PC-9 (cell line): ENCODE measurements at regions of chr3 and their contacts with region 1.

Region 1: GRCh38 chr3:190265796-190266195 is 56.5 kb downstream of the CLDN1 start:
- DNase-seq: peak; percentile 79 to 97
- H3K4me3 ChIP-seq: no peak overlapping the region
- H3K27ac ChIP-seq: peak overlapping the region; percentile 62
- H3K4me1 ChIP-seq: peaks cover 22% of the 10 kb centered on the region
- H3K27me3 ChIP-seq: no peaks in the 10 kb centered on the region
- CTCF ChIP-seq: no peak

Region 2: DNA sequence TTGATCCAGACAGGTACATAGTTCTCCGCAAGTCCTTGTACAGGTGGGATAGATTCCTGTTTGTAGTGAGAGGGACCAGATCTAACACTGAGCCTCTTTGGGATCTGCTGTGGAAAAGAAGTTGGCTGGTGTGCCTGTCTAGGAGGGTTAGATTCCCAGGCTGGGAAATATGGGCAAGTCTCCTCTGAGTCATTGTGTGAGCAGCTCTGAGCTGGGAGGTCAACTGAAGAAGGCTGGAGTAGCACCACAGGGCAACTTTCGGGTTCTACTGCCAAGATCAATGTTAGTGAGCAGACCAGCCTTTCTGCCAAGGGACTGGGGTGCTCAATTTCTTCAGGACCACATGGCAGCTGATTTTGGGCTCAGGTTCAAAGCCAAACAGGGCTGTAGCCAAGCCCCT is 23.0 kb after region 1 on chr3:
- CTCF ChIA-PET with region 1: no interaction called
- POLR2A ChIA-PET with region 1: no interaction called
- intact Hi-C with region 1: no loop called
- DNase-seq: no peak
- H3K4me3 ChIP-seq: no peak overlapping the region
- H3K27ac ChIP-seq: no peak overlapping the region
- H3K4me1 ChIP-seq: no peaks in the 10 kb centered on the region
- H3K27me3 ChIP-seq: no peaks in the 10 kb centered on the region
- CTCF ChIP-seq: no peak

Region 3: GRCh38 chr3:190302209-190302867 is 36.5 kb after region 1 on chr3:
- CTCF ChIA-PET with region 1: no interaction called
- POLR2A ChIA-PET with region 1: no interaction called
- intact Hi-C with region 1: loop called (anchors 1 kb)
- DNase-seq: peak in 1 of 2 experiments; percentile 43
- H3K4me3 ChIP-seq: 0 out of 2 replicates have a peak overlapping the region, but pooled peaks have one; percentile 2
- H3K27ac ChIP-seq: no peak overlapping the region
- H3K4me1 ChIP-seq: peaks cover 40% of the 10 kb centered on the region
- H3K27me3 ChIP-seq: no peaks in the 10 kb centered on the region
- CTCF ChIP-seq: no peak

Region 4: DNA sequence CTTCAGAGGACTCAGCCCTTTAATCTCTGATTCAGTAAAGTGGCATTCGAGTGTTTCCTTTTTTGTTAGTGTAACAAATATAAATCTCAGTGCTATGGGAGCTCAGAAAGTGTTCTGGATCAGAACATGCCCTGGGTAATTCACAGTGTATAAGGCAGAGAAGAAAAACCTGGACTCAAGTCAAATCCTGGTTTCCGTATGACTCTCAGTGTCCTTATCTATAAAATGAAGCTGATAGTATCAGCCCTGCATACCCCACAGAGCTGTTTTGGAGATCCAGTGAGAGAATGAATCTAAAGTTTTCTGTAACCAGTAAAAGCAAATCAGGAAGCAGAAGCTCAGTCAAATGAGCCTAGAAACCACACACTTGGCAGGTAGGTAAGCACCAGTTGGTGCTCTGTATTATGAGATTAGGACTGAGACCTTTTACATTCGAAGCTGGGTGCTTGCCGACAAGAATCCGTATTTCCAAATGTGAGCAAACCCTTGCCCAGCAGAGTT is 315.3 kb after region 1 on chr3:
- CTCF ChIA-PET with region 1: no interaction called
- POLR2A ChIA-PET with region 1: no interaction called
- intact Hi-C with region 1: no loop called
- DNase-seq: no peak
- H3K4me3 ChIP-seq: no peak overlapping the region
- H3K27ac ChIP-seq: no peak overlapping the region
- H3K4me1 ChIP-seq: peaks cover 13% of the 10 kb centered on the region
- H3K27me3 ChIP-seq: no peaks in the 10 kb centered on the region
- CTCF ChIP-seq: no peak

Region 5: GRCh38 chr3:190883973-190884832 is 618.4 kb after region 1 on chr3:
- CTCF ChIA-PET with region 1: no interaction called
- POLR2A ChIA-PET with region 1: no interaction called
- intact Hi-C with region 1: no loop called
- DNase-seq: peak; percentile 48 to 50
- H3K4me3 ChIP-seq: no peak overlapping the region
- H3K27ac ChIP-seq: no peak overlapping the region
- H3K4me1 ChIP-seq: no peaks in the 10 kb centered on the region
- H3K27me3 ChIP-seq: no peaks in the 10 kb centered on the region
- CTCF ChIP-seq: peak; percentile 97